ENCODE measurements at regions of chr7 and their contacts with region 1.

Region 1: DNA sequence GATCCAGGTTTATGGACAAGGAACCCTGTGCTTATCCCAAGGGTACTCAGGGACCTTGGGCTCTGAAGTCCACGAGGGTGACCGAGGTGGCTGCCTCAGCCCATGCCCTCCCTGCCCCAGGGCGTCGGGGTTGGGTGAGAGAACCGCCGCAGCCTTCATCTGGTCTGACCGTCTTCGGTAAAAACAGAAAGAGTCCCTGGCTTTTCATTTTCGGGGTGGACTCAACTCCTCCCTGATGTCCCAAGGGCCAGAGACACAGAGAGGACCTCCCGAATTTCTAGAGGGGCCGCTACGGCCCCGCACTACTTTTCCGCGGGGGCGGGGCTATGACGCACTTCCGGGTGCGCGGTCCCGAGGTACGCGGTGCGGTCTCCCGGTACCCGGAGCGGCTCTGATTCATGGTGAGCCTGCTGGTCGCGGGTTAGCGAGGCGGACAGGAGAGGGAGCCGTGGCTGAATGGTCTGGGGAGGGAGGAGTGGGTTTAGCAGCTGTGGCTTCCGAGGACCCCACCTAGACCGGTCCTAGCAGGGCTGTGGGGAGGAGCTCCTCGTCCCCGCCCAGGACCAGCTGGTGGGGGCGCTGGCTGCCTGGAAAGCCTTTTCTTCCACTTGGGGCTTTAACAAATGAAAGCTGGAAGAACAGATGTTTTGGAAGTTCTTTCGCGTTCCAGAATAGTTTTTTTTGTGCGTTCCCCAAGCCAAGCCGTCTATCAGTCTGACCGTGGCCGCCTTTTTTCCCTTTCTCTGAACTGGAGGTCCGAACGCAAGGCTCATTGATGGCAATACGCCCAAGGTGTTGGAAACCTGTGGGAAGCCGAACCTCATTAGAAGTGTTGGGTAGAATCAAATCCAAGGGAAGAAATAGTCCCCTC is at the start of gene ZSCAN21:
- DNase-seq: peak; percentile 89
- H3K4me3 ChIP-seq: peak within 1 kb of the TSS; percentile 89
- H3K27ac ChIP-seq: peak within 1 kb of the TSS; percentile 83
- H3K4me1 ChIP-seq: peaks cover 9% of the 10 kb centered on the region
- H3K27me3 ChIP-seq: no peaks in the 10 kb centered on the region
- CTCF ChIP-seq: 0 out of 2 replicates have a peak, but pooled peaks have one; percentile 30
- total RNA-seq, gene ZSCAN21: 17.2 and 21.7 TPM in 2 replicates

Region 2: GRCh38 chr7:99918959-99919813 is 130.5 kb before region 1 on chr7 and contains the start of gene TRIM4:
- CTCF ChIA-PET with region 1: no interaction called
- POLR2A ChIA-PET with region 1: no interaction called
- intact Hi-C with region 1: loop called (anchors 10 kb)
- DNase-seq: peak; percentile 93
- H3K4me3 ChIP-seq: peak within 1 kb of the TSS; percentile 81
- H3K27ac ChIP-seq: peak within 1 kb of the TSS; percentile 85
- H3K4me1 ChIP-seq: peaks cover 7% of the 10 kb centered on the region
- H3K27me3 ChIP-seq: no peaks in the 10 kb centered on the region
- CTCF ChIP-seq: 0 out of 2 replicates have a peak, but pooled peaks have one; percentile 13
- total RNA-seq, gene TRIM4: 18.3 and 23.4 TPM in 2 replicates

Region 3: GRCh38 chr7:100061518-100062193 is 12.0 kb after region 1 on chr7:
- CTCF ChIA-PET with region 1: no interaction called
- POLR2A ChIA-PET with region 1: no interaction called
- intact Hi-C with region 1: no loop called
- DNase-seq: no peak
- H3K4me3 ChIP-seq: no peak overlapping the region
- H3K27ac ChIP-seq: no peak overlapping the region
- H3K4me1 ChIP-seq: no peaks in the 10 kb centered on the region
- H3K27me3 ChIP-seq: no peaks in the 10 kb centered on the region
- CTCF ChIP-seq: no peak